Panc1 (cell line): ENCODE measurements at regions of chr15 and their contacts with region 1.

Region 1: GRCh38 chr15:90071208-90071807 is 31.0 kb downstream of the IDH2 start:
- DNase-seq: peak; percentile 47
- ATAC-seq: peak; percentile 84
- H3K4me3 ChIP-seq: no peak overlapping the region
- H3K27ac ChIP-seq: no peak overlapping the region
- H3K4me1 ChIP-seq: no peaks in the 10 kb centered on the region
- H3K27me3 ChIP-seq: no peaks in the 10 kb centered on the region
- CTCF ChIP-seq: peak; percentile 87

Region 2: GRCh38 chr15:89740137-89740536 is 331.2 kb before region 1 on chr15:
- CTCF ChIA-PET with region 1: no interaction called
- POLR2A ChIA-PET with region 1: no interaction called
- in situ Hi-C with region 1: no loop called
- intact Hi-C with region 1: loop called (anchors 10 kb)
- DNase-seq: peak; percentile 72
- ATAC-seq: peak; percentile 96
- H3K4me3 ChIP-seq: no peak overlapping the region; a peak in 1 of 4 replicates
- H3K27ac ChIP-seq: no peak overlapping the region
- H3K4me1 ChIP-seq: no peaks in the 10 kb centered on the region
- H3K27me3 ChIP-seq: no peaks in the 10 kb centered on the region
- CTCF ChIP-seq: peak; percentile 94

Region 3: DNA sequence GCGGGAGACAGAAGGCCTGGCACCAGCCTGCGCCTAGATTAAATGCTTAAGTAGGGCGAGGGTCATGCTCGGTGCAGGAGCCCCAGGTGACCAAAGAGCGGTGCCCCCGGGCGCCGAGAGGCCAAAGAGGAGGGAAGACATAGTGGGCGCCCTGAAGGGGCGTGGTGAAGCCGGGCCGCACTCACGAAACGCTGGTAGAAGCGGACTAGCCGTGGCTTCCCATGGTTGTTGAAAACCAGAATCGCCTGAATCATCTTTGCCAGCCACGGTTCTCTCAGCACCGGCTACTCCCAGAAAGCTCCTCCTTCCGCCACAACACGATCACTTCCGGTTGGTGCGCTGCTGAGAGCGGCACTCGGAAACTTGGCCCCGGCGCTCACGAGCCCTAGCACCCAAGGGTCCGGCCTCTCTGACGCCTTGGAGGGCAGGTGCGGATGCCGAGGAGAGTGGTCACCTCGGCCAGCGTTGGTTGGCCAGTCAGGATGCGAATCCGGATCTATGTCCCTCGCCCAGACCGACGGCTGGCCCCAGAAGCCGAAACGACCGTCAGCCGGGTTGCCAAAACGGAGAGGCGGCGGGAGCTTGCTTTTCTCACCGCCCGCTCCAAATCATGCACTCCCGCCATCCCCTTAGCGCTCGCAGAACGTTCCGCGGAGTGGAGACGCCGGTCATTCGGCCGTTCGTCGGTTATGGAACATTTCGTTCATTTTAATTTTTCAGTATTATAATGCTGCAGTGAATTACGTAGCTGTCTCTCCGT is 177.4 kb before region 1 on chr15 and contains the start of gene AP3S2:
- CTCF ChIA-PET with region 1: interaction called, 5 read pairs
- POLR2A ChIA-PET with region 1: no interaction called
- in situ Hi-C with region 1: no loop called
- intact Hi-C with region 1: loop called (anchors 5 kb)
- DNase-seq: peak; percentile 87
- ATAC-seq: peak; percentile 98
- H3K4me3 ChIP-seq: peak within 1 kb of the TSS; percentile 78 to 94
- H3K27ac ChIP-seq: peak within 1 kb of the TSS; percentile 98
- H3K4me1 ChIP-seq: peaks cover 8% of the 10 kb centered on the region; the same call in 1 of the 2 replicates
- H3K27me3 ChIP-seq: no peaks in the 10 kb centered on the region
- CTCF ChIP-seq: no peak
- total RNA-seq, gene AP3S2: 24.6 TPM

Region 4: DNA sequence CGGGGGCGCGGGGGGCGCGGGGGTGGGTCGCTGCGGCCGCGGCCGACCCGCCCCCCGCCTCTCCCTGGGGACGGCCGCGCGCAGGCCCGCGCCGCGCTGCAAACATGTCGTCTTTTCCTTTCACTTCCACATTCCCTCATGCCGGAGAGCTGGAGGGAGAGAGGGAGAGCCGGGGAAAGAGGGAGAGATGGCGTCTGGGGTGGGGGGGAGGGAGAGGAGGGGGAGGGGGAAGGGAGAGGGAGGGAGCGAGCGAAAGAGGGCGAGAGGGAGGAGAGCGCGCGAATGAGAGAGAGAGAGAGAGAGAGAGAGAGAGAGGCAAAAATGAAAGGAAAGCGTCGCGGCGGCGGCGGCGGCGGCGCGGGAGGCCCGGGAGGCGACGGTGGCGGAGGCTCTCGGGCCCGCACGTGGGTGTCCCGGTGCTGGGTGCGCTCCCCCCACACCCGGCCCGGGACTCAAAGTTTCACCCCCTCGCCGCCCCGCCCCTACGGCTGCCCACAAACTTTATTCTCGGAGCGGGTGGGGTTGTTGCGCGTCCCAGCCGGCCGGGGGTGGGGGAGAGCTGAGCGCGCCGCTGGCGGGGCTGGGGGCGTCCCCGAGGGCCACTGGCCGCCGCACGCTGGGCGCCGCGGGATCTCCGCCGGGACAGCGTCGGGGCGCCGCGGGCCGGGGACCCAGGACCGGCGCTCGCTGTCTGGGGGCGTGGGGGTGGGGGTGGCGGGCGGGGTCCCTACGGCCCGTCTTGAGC is 69.5 kb before region 1 on chr15:
- CTCF ChIA-PET with region 1: no interaction called
- POLR2A ChIA-PET with region 1: interaction called, 9 read pairs
- in situ Hi-C with region 1: no loop called
- intact Hi-C with region 1: loop called (anchors 5 kb)
- DNase-seq: no peak
- ATAC-seq: peak; percentile 56
- H3K4me3 ChIP-seq: peak overlapping the region; percentile 64 to 81
- H3K27ac ChIP-seq: no peak overlapping the region
- H3K4me1 ChIP-seq: peaks cover 61% of the 10 kb centered on the region
- H3K27me3 ChIP-seq: no peaks in the 10 kb centered on the region
- CTCF ChIP-seq: no peak

Region 5: DNA sequence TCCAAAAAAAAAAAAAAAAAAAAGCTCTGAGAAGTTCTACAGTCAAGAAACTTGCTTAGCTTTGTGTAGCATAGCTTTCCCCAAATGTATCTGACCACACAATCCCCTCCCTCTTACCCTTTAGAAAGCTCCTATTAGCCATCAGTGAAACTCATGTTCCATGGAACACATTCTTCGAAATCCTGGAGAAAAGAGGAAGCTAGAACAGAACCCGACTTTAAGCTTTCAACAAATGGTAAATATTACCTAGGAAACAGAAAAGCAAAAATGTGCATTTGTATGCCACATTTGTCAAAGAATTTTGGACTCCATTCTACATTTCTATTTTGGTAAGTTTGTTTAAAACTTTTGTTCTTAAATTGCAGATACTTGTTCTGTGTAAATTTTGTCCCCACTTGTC is 441.0 kb after region 1 on chr15:
- CTCF ChIA-PET with region 1: interaction called, 10 read pairs
- POLR2A ChIA-PET with region 1: no interaction called
- in situ Hi-C with region 1: no loop called
- intact Hi-C with region 1: no loop called
- DNase-seq: no peak
- ATAC-seq: no peak
- H3K4me3 ChIP-seq: no peak overlapping the region
- H3K27ac ChIP-seq: no peak overlapping the region
- H3K4me1 ChIP-seq: no peaks in the 10 kb centered on the region
- H3K27me3 ChIP-seq: no peaks in the 10 kb centered on the region
- CTCF ChIP-seq: no peak